ENCODE measurements at regions of chr2 and their contacts with region 1.

Region 1: GRCh38 chr2:96509114-96509846 is 4.1 kb upstream of the NEURL3 start:
- DNase-seq: peak in 12 of 14 experiments; percentile 26 to 75 (median 42)
- ATAC-seq: no peak
- H3K4me3 ChIP-seq: no peak overlapping the region
- H3K4me3 Mint-ChIP-seq: peak overlapping the region; percentile 6
- H3K27ac ChIP-seq: no peak overlapping the region
- H3K27ac Mint-ChIP-seq: no peak overlapping the region
- H3K4me1 ChIP-seq: peaks cover 20% of the 10 kb centered on the region
- H3K4me1 Mint-ChIP-seq: peaks cover 18% of the 10 kb centered on the region
- H3K27me3 ChIP-seq: peaks cover 5 to 11% of the 10 kb centered on the region in 2 experiments
- H3K27me3 Mint-ChIP-seq: peaks cover 22% of the 10 kb centered on the region
- CTCF ChIP-seq: peak; percentile 64

Region 2: DNA sequence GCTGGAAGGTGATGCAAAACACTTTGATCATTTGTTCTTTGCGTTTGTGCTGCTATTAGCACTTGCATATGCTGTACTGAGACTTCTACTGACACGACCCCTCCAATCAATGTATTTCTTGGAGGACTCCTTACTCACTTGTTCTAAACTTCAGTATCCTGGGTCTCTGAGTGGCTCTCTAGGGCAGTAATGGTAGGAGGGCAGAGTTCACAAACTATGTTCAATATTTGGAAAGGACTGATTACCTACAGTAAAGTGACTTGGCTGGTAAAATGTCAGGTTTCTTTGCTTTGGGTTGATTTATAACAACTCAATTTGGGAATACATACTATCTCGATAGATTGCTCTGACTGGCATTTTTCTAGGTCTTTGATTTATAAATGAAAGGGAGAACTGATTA is 823.8 kb before region 1 on chr2:
- CTCF ChIA-PET with region 1: no interaction called
- POLR2A ChIA-PET with region 1: no interaction called
- intact Hi-C with region 1: no loop called
- DNase-seq: no peak
- ATAC-seq: no peak
- H3K4me3 ChIP-seq: no peak overlapping the region
- H3K4me3 Mint-ChIP-seq: no peak overlapping the region
- H3K27ac ChIP-seq: no peak overlapping the region
- H3K27ac Mint-ChIP-seq: no peak overlapping the region
- H3K4me1 ChIP-seq: peaks cover 3% of the 10 kb centered on the region
- H3K4me1 Mint-ChIP-seq: peaks cover 5% of the 10 kb centered on the region
- H3K27me3 ChIP-seq: peaks cover 0 to 3% of the 10 kb centered on the region in 2 experiments
- H3K27me3 Mint-ChIP-seq: peaks cover 23% of the 10 kb centered on the region
- CTCF ChIP-seq: no peak

Region 3: DNA sequence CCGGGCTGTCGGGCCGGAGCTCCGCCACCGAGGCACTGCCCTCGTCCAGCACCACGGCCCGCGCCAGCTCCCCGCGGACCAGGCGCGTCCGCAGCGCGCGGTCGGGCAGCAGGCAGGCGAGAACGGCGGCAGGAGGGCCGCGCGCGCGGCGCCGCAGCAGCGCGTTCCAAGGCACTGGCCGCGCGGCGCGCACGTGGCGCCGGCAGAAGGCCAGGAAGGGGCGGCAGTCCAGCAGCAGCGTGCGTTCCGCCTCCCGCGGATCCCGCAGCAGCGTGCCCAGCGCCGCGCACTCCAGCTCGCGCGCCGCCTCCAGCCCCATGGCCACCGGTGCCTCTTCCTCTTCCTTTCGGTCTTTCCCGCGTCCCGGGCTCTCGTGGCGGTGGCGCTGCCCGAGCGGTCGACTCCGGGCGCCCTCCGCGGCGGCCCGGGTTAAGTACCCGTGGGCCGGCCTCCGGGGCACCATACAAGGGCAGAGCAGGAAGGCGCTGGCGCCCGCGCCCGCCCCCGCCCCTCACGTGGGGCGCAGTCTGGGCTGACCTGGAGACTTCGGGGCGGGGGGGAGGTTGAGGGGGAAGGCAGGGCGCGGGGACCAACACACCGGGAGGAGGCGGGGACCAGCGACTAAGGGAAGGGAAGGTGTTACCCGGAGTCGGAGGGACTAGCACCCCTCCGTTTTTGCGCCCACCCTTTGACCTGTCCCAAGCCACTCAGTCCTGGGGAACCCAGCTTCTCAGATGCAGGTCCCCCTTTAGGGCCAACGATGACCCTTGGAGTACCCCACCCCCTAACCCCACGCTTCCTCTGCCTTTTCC is 364.0 kb before region 1 on chr2 and contains the start of gene DUSP2:
- CTCF ChIA-PET with region 1: no interaction called
- POLR2A ChIA-PET with region 1: no interaction called
- intact Hi-C with region 1: loop called in 1 of 2 experiments (anchors 5 kb)
- DNase-seq: peak; percentile 71 to 96 (median 85)
- ATAC-seq: peak; percentile 33
- H3K4me3 ChIP-seq: peak within 1 kb of the TSS; percentile 93
- H3K4me3 Mint-ChIP-seq: peak within 1 kb of the TSS; percentile 98
- H3K27ac ChIP-seq: peak within 1 kb of the TSS; percentile 97 to 99
- H3K27ac Mint-ChIP-seq: peak within 1 kb of the TSS; percentile 98
- H3K4me1 ChIP-seq: peaks cover 73% of the 10 kb centered on the region
- H3K4me1 Mint-ChIP-seq: peaks cover 79% of the 10 kb centered on the region
- H3K27me3 ChIP-seq: no peaks in the 10 kb centered on the region
- H3K27me3 Mint-ChIP-seq: no peaks in the 10 kb centered on the region
- CTCF ChIP-seq: no peak
- total RNA-seq, gene DUSP2: 728 to 730 TPM

Region 4: DNA sequence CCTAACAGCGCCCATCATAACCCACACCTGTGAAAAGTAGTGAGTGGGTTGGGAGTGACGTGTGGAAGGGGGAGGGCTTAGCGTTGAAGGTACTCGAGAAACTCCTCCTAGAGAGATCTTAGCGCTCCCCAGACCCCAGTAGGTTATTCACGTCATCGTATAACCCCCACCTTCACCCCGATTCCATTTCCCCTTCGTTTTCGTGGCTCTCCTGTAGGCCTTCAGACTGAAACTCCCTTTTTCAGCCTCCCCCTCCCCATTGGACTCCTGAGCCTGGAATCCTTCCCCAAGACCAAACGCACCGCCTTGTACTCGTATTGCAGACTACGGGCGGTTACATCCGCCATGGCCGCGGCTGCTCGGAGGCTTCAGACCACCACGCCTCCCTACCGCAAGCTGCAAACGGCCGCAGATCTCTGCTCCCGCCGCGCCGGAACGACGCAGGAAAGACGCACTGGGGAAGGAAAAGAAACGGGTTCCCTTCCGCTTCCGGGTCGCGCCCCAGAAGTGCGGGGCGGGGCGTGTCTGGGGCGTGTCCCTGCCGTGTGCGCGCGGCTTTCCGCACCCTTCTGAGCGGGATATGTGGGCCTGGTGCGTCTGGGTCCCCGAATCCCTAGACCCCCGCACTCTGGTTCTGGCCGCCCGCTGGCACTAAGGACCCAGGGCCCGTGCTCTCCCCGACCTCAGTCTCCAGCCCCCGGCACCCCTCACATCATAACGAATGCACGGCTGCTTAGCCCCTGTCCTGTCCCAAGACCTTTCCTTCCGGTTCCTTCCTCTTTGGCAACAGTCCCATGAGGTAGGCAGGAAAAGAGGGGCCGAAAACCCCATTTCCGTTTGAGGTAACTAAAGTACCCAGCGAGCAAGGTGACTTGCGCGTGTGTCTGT is 203.9 kb before region 1 on chr2 and contains the start of gene SNRNP200:
- CTCF ChIA-PET with region 1: no interaction called
- POLR2A ChIA-PET with region 1: no interaction called
- intact Hi-C with region 1: loop called (anchors 1 to 2 kb)
- DNase-seq: peak; percentile 83 to 97 (median 88)
- ATAC-seq: peak; percentile 83
- H3K4me3 ChIP-seq: peak within 1 kb of the TSS; percentile 100
- H3K4me3 Mint-ChIP-seq: peak within 1 kb of the TSS; percentile 94
- H3K27ac ChIP-seq: peak within 1 kb of the TSS; percentile 97
- H3K27ac Mint-ChIP-seq: peak within 1 kb of the TSS; percentile 97
- H3K4me1 ChIP-seq: peaks cover 48% of the 10 kb centered on the region
- H3K4me1 Mint-ChIP-seq: peaks cover 58% of the 10 kb centered on the region
- H3K27me3 ChIP-seq: no peaks in the 10 kb centered on the region
- H3K27me3 Mint-ChIP-seq: no peaks in the 10 kb centered on the region
- CTCF ChIP-seq: no peak
- total RNA-seq, gene SNRNP200: 274 to 297 TPM

Region 5: GRCh38 chr2:96407041-96407918 is 102.0 kb before region 1 on chr2:
- CTCF ChIA-PET with region 1: interaction called, 11 read pairs
- POLR2A ChIA-PET with region 1: interaction called, 19 read pairs
- intact Hi-C with region 1: loop called (anchors 1 kb)
- DNase-seq: peak; percentile 58 to 91 (median 76)
- ATAC-seq: peak; percentile 93
- H3K4me3 ChIP-seq: no peak overlapping the region
- H3K4me3 Mint-ChIP-seq: peak overlapping the region; percentile 79
- H3K27ac ChIP-seq: peak overlapping the region; percentile 33 to 35
- H3K27ac Mint-ChIP-seq: peak overlapping the region; percentile 84
- H3K4me1 ChIP-seq: peaks cover 38% of the 10 kb centered on the region
- H3K4me1 Mint-ChIP-seq: peaks cover 41% of the 10 kb centered on the region
- H3K27me3 ChIP-seq: no peaks in the 10 kb centered on the region
- H3K27me3 Mint-ChIP-seq: no peaks in the 10 kb centered on the region
- CTCF ChIP-seq: peak; percentile 74

Region 6: DNA sequence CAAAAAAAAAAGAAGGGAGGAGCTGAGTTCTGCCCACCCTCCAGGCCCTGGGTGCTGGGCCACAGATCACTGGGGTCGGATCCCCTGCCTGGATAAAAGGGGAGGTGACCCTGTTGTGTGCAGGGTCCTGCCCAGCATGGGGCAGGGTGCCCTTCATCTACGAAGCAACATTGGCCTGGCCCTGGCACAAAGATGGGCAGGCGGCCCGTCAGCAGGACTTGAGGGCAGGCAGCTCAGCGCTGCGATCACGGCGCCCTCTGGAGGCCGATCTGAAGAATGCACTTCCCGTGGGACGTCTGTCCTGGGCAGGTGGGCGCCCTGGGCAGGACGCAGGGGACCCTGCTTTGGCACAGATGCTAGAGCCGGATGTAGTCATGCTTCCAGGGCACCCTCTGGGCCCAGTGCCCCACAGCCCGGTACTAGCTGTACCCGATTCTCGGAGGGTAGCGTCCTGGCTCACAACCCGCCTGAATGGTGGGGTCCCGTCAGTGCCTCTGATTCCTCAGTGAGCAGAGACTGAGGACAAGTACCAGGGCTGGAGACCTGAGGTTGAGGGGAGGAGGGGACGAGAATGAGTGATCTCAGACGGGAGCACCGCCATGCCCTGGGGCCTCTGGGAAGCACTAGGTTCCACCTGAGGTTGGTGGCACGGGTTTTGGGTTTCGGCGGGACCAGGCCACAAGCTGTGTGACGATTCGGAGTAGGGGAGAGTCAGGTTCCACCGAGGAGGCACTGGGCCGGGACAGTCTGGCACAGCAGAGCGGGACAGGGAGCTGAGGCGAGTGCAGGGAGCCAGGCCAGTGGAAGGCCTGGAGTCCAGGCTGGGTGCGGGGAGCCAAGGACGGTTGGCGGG is 45.2 kb after region 1 on chr2:
- CTCF ChIA-PET with region 1: interaction called, 9 read pairs
- POLR2A ChIA-PET with region 1: no interaction called
- intact Hi-C with region 1: loop called in 1 of 2 experiments (anchors 1 kb)
- DNase-seq: peak; percentile 57 to 88 (median 67)
- ATAC-seq: peak; percentile 56
- H3K4me3 ChIP-seq: peak overlapping the region; percentile 7
- H3K4me3 Mint-ChIP-seq: no peak overlapping the region
- H3K27ac ChIP-seq: no peak overlapping the region
- H3K27ac Mint-ChIP-seq: peak overlapping the region; percentile 79
- H3K4me1 ChIP-seq: peaks cover 20% of the 10 kb centered on the region
- H3K4me1 Mint-ChIP-seq: peaks cover 29% of the 10 kb centered on the region
- H3K27me3 ChIP-seq: no peaks in the 10 kb centered on the region
- H3K27me3 Mint-ChIP-seq: no peaks in the 10 kb centered on the region
- CTCF ChIP-seq: peak; percentile 98

Measured in CD4-positive, alpha-beta T cell (primary cell).